ENCODE measurements at regions of chr2 and their contacts with region 1.

Region 1: GRCh38 chr2:159589286-159589685 is 27.1 kb downstream of the BAZ2B start:
- DNase-seq: no peak
- H3K4me3 ChIP-seq: no peak overlapping the region
- H3K27ac ChIP-seq: no peak overlapping the region
- H3K4me1 ChIP-seq: no peaks in the 10 kb centered on the region
- H3K27me3 ChIP-seq: no peaks in the 10 kb centered on the region
- CTCF ChIP-seq: no peak
- POLR2A ChIP-seq: no peak

Region 2: DNA sequence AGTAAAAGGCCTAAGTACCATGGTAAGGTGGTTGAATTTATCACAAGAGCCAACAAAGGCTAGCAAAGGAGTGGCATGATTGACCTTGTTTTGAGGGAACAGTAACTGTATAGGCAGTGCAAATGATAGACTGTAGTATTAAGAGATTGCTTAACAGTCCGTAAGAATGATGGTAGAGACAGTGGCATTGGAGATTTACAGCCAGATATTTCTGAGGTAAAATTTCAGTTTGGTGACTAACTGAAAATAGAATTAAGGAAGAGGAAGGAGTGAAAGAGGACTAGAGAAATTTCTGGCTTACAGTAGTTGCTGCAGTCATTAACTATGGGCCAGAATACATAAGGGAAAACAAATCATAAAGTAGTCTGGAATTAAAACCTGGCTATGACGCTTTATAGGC is 31.5 kb after region 1 on chr2:
- intact Hi-C with region 1: no loop called
- DNase-seq: no peak
- H3K4me3 ChIP-seq: no peak overlapping the region
- H3K27ac ChIP-seq: no peak overlapping the region
- H3K4me1 ChIP-seq: no peaks in the 10 kb centered on the region
- H3K27me3 ChIP-seq: no peaks in the 10 kb centered on the region
- CTCF ChIP-seq: no peak
- POLR2A ChIP-seq: no peak

Region 3: DNA sequence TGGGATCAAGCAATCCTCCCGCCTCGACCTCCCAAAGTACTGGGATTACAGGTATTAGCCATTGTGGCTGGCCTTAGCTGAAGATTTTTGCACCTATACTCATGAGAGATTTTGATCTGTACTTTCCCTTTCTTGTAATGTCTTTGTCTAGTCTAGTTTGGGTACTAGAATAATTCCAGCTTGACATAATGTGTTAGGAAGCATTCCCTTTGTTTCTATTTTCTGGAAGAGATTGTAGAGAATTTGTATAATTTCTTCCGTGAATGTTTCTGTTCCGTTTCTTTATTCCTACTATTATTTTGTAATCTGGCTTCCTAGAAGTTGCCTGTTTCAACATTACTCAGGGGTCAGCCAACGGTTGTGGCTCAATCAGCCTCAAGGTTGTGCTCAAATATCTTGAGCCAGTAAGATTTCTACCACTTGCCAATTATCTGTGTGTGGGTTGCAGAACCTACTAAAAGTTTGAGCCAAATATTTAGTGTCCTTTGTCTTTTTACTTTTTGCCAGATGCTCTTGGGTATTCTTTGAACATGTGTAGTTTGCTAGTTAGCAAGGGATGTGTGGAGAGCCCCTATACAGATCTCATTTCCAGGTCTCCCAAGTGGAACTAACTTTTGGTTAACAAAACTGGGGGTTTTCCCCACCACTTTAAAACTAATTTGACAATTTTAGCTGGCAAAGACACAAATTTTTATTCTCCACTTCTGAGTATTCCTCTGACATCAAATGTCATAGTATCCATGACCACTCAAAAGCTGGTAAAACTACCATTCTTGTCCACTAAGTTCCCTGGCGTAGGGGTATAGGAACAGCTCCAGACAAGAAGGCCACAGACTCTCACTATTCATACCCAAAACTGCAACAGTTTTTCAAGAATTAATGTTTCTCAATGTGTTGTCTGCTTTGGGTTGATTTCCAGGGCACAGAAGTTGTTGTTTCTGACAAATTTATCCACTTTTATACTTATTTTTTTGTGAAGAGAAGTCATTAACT is 69.9 kb after region 1 on chr2:
- intact Hi-C with region 1: loop called (anchors 2 kb)
- DNase-seq: peak in 1 of 2 donors; percentile 41
- H3K4me3 ChIP-seq: no peak overlapping the region
- H3K27ac ChIP-seq: peak overlapping the region; percentile 37 to 67
- H3K4me1 ChIP-seq: no peaks in the 10 kb centered on the region
- H3K27me3 ChIP-seq: no peaks in the 10 kb centered on the region
- CTCF ChIP-seq: no peak
- POLR2A ChIP-seq: no peak